GM12878 (cell line): ENCODE measurements at regions of chr10 and their contacts with region 1.

Region 1: DNA sequence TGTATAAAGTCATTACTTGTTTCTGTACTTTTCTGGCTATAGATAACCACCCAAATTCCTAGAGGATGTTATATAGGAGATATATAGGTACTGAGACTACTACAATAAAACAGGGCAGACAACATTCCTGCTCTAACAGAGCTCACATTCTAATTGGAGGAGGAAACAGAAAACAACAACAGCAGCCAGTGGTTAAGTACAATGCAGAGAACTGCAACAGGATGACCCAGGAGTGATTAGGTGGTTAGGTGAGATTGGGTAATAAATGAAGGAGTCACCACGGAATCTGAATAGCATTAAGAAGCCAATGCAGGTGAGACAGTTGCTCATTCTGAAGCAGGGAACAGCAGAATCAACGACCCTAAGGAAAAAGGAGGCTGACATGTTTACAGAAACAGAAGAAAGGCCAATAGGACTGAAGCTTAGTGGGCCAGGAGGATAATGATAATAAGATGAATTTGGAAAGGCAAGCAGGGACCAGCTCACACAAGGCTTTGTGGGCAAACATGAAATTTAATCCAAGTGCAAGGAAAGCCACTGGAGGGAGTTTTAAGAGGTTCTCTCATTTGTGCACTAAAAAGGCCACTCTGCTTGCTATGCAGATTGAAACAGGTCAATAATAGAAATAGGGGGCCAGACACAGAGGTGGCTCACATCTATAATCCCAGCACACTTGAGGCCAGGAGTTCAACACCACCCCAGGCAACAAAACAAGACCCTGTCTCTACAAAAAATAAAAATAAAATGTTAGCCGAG is 16.9 kb upstream of the REEP3 start:
- DNase-seq: no peak
- ATAC-seq: no peak
- H3K4me3 ChIP-seq: no peak overlapping the region
- H3K27ac ChIP-seq: no peak overlapping the region
- H3K4me1 ChIP-seq: no peaks in the 10 kb centered on the region
- H3K27me3 ChIP-seq: no peaks in the 10 kb centered on the region
- CTCF ChIP-seq: no peak
- EP300 ChIP-seq: no peak
- POLR2A ChIP-seq: no peak
- RAD21 ChIP-seq: no peak

Region 2: DNA sequence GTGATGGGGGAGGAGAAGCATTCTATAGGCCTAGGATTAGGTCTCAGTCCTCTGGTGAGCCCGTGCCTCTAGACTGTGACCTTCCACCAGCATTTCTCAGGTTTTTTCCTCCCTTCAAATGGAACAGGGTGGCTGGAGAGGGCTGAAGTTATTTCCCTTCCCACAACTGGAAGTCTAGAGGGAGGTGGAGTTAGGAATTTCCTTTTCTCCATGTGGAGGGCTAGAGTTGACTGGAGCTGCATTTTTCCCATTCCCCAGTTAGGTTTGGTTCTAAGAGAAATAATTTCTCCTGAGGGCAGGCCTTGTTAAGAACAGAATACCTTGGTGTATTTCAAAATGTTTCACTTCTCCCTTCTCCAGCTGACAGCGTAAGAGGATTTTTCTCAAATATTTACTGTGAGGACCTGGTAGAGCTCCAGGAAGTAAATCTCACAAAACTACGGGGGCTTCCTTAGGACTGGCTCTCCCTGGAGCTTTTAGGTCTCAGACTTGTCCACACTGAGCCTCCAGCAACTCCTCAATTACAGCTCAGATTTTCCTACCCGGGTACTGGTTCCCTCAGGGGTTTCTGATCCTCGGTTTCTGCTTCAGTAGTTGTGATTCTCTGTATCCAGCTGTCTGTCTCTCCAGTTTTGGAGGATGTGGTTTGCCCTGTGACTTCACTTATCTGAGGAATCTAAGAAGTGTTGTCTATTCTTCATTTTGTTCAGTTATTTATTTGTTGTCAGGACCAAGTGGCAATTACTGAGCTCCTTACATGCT is 10.9 kb after region 1 on chr10:
- CTCF ChIA-PET with region 1: interaction called, 6 read pairs
- POLR2A ChIA-PET with region 1: interaction called, 18 read pairs
- RAD21 ChIA-PET with region 1: interaction called, 4 read pairs
- SMC1A ChIA-PET with region 1: interaction called, 26 read pairs
- in situ Hi-C with region 1: no loop called
- intact Hi-C with region 1: no loop called
- DNase-seq: no peak
- ATAC-seq: peak; percentile 10
- H3K4me3 ChIP-seq: 0 out of 2 replicates have a peak overlapping the region, but pooled peaks have one; percentile 18
- H3K27ac ChIP-seq: peak overlapping the region; percentile 50
- H3K4me1 ChIP-seq: peaks cover 13% of the 10 kb centered on the region; the same call in 1 of the 2 replicates
- H3K27me3 ChIP-seq: no peaks in the 10 kb centered on the region
- CTCF ChIP-seq: no peak
- EP300 ChIP-seq: no peak
- POLR2A ChIP-seq: no peak
- RAD21 ChIP-seq: no peak